Activated naive CD8-positive, alpha-beta T cell treated with anti-CD3 and anti-CD28 coated beads, Interleukin-2, amount 10 ng/mL, durations not matched to agents 7 days and 5 days (primary cell): ENCODE measurements at regions of chr1 and their contacts with region 1.

Region 1: GRCh38 chr1:1678581-1679390 is 13.8 kb downstream of the SLC35E2B start:
- DNase-seq: peak; percentile 74
- ATAC-seq: peak; percentile 59
- H3K4me3 Mint-ChIP-seq: peak overlapping the region; percentile 81
- H3K27ac Mint-ChIP-seq: peak overlapping the region; percentile 90
- H3K4me1 Mint-ChIP-seq: peaks cover 16% of the 10 kb centered on the region
- H3K27me3 Mint-ChIP-seq: no peaks in the 10 kb centered on the region

Region 2: GRCh38 chr1:1630271-1630964 is 48.4 kb before region 1 on chr1:
- POLR2A ChIA-PET with region 1: interaction called, 17 read pairs
- DNase-seq: peak; percentile 97
- ATAC-seq: peak; percentile 73
- H3K4me3 Mint-ChIP-seq: peak overlapping the region; percentile 82
- H3K27ac Mint-ChIP-seq: peak overlapping the region; percentile 95
- H3K4me1 Mint-ChIP-seq: peaks cover 2% of the 10 kb centered on the region
- H3K27me3 Mint-ChIP-seq: peaks cover 7% of the 10 kb centered on the region